ENCODE measurements at regions of chr5 and their contacts with region 1.

Region 1: DNA sequence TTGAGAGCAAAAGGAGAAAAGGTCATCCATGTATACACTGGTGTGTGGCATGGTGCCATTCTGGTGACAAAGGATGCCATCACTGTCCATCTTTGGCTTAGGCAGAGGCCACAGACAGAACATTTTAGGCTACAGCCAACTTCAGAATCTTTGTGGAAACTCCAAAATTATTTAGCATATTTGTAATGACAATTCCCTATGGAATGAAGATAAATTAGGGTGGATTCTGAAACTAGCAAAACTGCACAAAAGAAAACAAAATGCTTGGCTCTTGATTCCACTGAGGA is 92.5 kb downstream of the FBXW11 start:
- DNase-seq: no peak
- ATAC-seq: no peak
- H3K4me3 ChIP-seq: no peak overlapping the region
- H3K4me3 Mint-ChIP-seq: peak overlapping the region in 1 of 10 donors; percentile 2
- H3K27ac ChIP-seq: no peak overlapping the region
- H3K27ac Mint-ChIP-seq: peak overlapping the region; percentile 12 to 88 (median 73)
- H3K4me1 ChIP-seq: peaks cover 4 to 12% of the 10 kb centered on the region in 2 donors
- H3K4me1 Mint-ChIP-seq: peaks cover 25 to 59% (median 53%) of the 10 kb centered on the region in 7 donors
- H3K27me3 ChIP-seq: no peaks in the 10 kb centered on the region
- H3K27me3 Mint-ChIP-seq: no peaks in the 10 kb centered on the region

Region 2: GRCh38 chr5:171379961-171380360 is 534.0 kb before region 1 on chr5:
- CTCF ChIA-PET with region 1: no interaction called
- POLR2A ChIA-PET with region 1: no interaction called
- intact Hi-C with region 1: loop called in 1 of 2 experiments (anchors 5 kb)
- DNase-seq: no peak
- ATAC-seq: no peak
- H3K4me3 ChIP-seq: no peak overlapping the region
- H3K4me3 Mint-ChIP-seq: no peak overlapping the region
- H3K27ac ChIP-seq: no peak overlapping the region
- H3K27ac Mint-ChIP-seq: no peak overlapping the region
- H3K4me1 ChIP-seq: no peaks in the 10 kb centered on the region
- H3K4me1 Mint-ChIP-seq: no peaks in the 10 kb centered on the region
- H3K27me3 ChIP-seq: no peaks in the 10 kb centered on the region
- H3K27me3 Mint-ChIP-seq: no peaks in the 10 kb centered on the region

Region 3: GRCh38 chr5:171898386-171898785 is 15.5 kb before region 1 on chr5:
- CTCF ChIA-PET with region 1: interaction called, 11 read pairs
- POLR2A ChIA-PET with region 1: no interaction called
- intact Hi-C with region 1: no loop called
- DNase-seq: no peak
- ATAC-seq: no peak
- H3K4me3 ChIP-seq: no peak overlapping the region
- H3K4me3 Mint-ChIP-seq: no peak overlapping the region
- H3K27ac ChIP-seq: no peak overlapping the region
- H3K27ac Mint-ChIP-seq: no peak overlapping the region
- H3K4me1 ChIP-seq: no peaks in the 10 kb centered on the region
- H3K4me1 Mint-ChIP-seq: peaks cover 8 to 34% (median 17%) of the 10 kb centered on the region in 7 donors
- H3K27me3 ChIP-seq: no peaks in the 10 kb centered on the region
- H3K27me3 Mint-ChIP-seq: no peaks in the 10 kb centered on the region

Region 4: DNA sequence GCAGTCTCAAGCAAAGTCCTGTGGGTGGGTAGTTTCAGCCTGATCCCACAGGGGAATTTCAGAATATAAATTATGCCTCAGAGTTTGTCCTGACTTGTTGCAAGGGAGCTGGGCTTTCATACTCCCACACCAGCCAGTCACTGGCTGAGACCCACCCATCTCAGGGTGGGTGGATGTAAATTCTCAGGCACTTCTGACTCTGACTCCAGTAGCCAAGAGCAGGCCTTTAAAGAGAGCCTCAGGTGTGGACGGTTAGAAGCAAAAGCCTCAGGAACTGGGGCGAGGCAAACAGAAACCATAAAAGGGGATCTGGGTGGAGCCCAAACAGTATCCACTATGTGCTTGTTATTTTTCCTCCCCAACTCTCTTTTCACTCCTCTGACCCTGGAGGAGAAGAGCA is 121.1 kb after region 1 on chr5:
- CTCF ChIA-PET with region 1: interaction called, 19 read pairs
- POLR2A ChIA-PET with region 1: interaction called, 3 read pairs
- intact Hi-C with region 1: loop called (anchors 1 kb)
- DNase-seq: no peak
- ATAC-seq: peak; percentile 27
- H3K4me3 ChIP-seq: no peak overlapping the region
- H3K4me3 Mint-ChIP-seq: peak overlapping the region in 1 of 10 donors; percentile 20
- H3K27ac ChIP-seq: no peak overlapping the region
- H3K27ac Mint-ChIP-seq: no peak overlapping the region
- H3K4me1 ChIP-seq: no peaks in the 10 kb centered on the region
- H3K4me1 Mint-ChIP-seq: peaks cover 0 to 16% (median 9%) of the 10 kb centered on the region in 7 donors
- H3K27me3 ChIP-seq: no peaks in the 10 kb centered on the region
- H3K27me3 Mint-ChIP-seq: no peaks in the 10 kb centered on the region

Region 5: DNA sequence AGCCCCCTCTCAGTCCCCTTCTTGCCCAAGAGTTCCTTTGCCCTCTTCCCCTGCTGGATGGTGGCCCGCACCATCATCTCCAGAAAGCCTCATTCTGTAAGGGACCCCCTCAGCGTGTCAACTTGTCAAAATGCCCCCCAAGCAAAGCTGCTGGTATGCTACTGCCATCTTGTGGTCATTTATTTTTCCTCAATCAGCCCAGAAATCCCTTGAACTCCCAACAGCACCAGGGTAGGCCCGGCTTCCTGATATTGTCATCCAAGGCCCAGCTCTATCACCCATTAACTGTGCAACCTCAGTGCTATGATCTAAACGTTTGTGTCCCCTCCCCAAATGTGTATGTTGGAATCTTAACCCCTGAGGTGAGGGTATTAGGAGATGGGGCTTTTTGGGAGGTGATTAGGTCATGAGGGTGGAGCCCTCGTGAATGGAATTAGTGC is 145.8 kb after region 1 on chr5:
- CTCF ChIA-PET with region 1: interaction called, 21 read pairs
- POLR2A ChIA-PET with region 1: no interaction called
- intact Hi-C with region 1: loop called (anchors 1 to 5 kb)
- DNase-seq: peak in 1 of 9 donors; percentile 36
- ATAC-seq: no peak
- H3K4me3 ChIP-seq: no peak overlapping the region
- H3K4me3 Mint-ChIP-seq: peak overlapping the region in 4 of 10 donors; percentile 4 to 42 (median 12)
- H3K27ac ChIP-seq: no peak overlapping the region
- H3K27ac Mint-ChIP-seq: peak overlapping the region; percentile 3 to 91 (median 54)
- H3K4me1 ChIP-seq: peaks cover 0 to 7% of the 10 kb centered on the region in 2 donors
- H3K4me1 Mint-ChIP-seq: peaks cover 22 to 68% (median 33%) of the 10 kb centered on the region in 7 donors
- H3K27me3 ChIP-seq: no peaks in the 10 kb centered on the region
- H3K27me3 Mint-ChIP-seq: no peaks in the 10 kb centered on the region

Region 6: GRCh38 chr5:172106511-172107356 is 192.8 kb after region 1 on chr5:
- CTCF ChIA-PET with region 1: interaction called, 4 read pairs
- POLR2A ChIA-PET with region 1: no interaction called
- intact Hi-C with region 1: loop called in 1 of 2 experiments (anchors 2 kb)
- DNase-seq: peak; percentile 31 to 78 (median 59)
- ATAC-seq: peak; percentile 43
- H3K4me3 ChIP-seq: no peak overlapping the region
- H3K4me3 Mint-ChIP-seq: peak overlapping the region in 8 of 10 donors; percentile 20 to 49 (median 39)
- H3K27ac ChIP-seq: peak overlapping the region; percentile 24
- H3K27ac Mint-ChIP-seq: peak overlapping the region; percentile 18 to 88 (median 81)
- H3K4me1 ChIP-seq: peaks cover 31 to 37% of the 10 kb centered on the region in 2 donors
- H3K4me1 Mint-ChIP-seq: peaks cover 23 to 61% (median 43%) of the 10 kb centered on the region in 7 donors
- H3K27me3 ChIP-seq: no peaks in the 10 kb centered on the region
- H3K27me3 Mint-ChIP-seq: no peaks in the 10 kb centered on the region

Region 7: DNA sequence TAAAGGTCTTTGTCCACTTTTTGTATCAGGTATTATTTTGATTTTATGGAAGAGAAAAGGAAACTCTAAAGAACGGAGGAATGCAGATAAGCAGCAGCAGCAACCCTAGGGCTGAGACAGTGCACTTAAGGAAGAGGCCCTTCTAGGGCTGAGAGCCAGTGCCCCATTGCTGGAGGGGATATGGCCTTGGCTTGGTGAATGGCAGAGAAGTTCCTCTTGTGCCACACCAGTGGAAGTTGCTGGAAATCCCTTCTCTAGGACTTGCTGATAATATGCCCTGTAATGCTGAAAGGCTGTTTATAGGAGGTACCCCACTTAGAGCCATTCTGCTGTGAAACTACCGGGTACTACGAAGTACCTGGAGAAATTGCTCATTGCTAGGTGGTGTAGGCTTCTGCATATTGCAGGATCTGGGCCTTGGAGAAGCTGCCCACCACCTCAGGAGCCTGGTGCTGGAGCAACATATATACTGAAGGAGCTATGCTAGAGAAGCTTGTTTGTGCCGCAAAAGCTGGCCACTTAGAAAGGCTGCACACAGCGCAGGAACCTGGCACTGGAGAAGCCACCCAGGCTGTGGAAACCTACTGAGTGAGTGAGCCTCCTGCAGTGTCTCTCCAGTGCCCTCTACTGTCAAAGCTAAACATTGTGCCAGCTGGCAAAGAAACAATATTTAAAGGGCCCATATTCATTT is 379.3 kb after region 1 on chr5:
- CTCF ChIA-PET with region 1: interaction called, 13 read pairs
- POLR2A ChIA-PET with region 1: no interaction called
- intact Hi-C with region 1: loop called (anchors 1 kb)
- DNase-seq: peak; percentile 20 to 77 (median 67)
- ATAC-seq: peak; percentile 100
- H3K4me3 ChIP-seq: no peak overlapping the region
- H3K4me3 Mint-ChIP-seq: no peak overlapping the region
- H3K27ac ChIP-seq: no peak overlapping the region
- H3K27ac Mint-ChIP-seq: peak overlapping the region in 1 of 9 donors; percentile 43
- H3K4me1 ChIP-seq: no peaks in the 10 kb centered on the region
- H3K4me1 Mint-ChIP-seq: peaks cover 0 to 4% (median 2%) of the 10 kb centered on the region in 7 donors
- H3K27me3 ChIP-seq: no peaks in the 10 kb centered on the region
- H3K27me3 Mint-ChIP-seq: peaks cover 0 to 12% (median 0%) of the 10 kb centered on the region in 5 donors